A673 (cell line): ENCODE measurements at regions of chr17 and their contacts with region 1.

Region 1: GRCh38 chr17:34892461-34893249 is 68.6 kb downstream of the CCT6B start:
- DNase-seq: peak; percentile 25
- H3K4me3 ChIP-seq: no peak overlapping the region
- H3K27ac ChIP-seq: no peak overlapping the region
- H3K4me1 ChIP-seq: no peaks in the 10 kb centered on the region
- H3K27me3 ChIP-seq: no peaks in the 10 kb centered on the region
- CTCF ChIP-seq: peak; percentile 60

Region 2: DNA sequence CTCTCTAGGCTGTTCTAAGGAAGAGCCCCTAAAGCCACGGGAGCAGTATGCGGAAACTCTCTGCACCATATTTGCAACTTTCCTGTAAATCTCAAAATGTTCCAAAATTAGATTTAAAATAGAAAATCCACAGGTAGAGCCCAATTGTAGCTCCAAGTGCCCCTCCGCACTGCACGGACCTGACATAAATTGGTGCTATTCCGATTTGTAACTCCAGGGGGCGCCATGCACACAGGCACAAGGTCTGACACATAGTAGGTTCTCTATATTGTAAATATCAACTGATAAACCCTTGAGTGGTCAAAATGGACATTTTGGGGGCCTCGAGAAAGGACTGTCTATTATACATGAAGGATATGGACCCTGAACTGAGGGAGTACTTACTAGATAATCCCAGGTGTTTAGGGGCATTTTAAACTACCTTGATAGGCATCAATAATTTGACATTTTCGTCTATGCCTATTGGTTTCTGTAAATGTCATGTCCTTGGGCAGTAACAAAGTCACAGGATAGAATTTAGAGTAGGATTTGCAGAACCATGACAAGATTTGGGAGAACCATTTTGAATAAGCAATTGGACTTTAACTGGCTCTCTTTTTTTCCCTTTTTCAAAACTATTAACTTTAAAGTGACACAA is 349.8 kb before region 1 on chr17:
- CTCF ChIA-PET with region 1: no interaction called
- POLR2A ChIA-PET with region 1: no interaction called
- intact Hi-C with region 1: loop called (anchors 5 kb)
- DNase-seq: peak; percentile 2
- H3K4me3 ChIP-seq: no peak overlapping the region
- H3K27ac ChIP-seq: no peak overlapping the region
- H3K4me1 ChIP-seq: no peaks in the 10 kb centered on the region
- H3K27me3 ChIP-seq: peaks cover 13% of the 10 kb centered on the region
- CTCF ChIP-seq: peak; percentile 80

Region 3: GRCh38 chr17:34584805-34585416 is 307.7 kb before region 1 on chr17:
- CTCF ChIA-PET with region 1: interaction called, 3 read pairs
- POLR2A ChIA-PET with region 1: no interaction called
- intact Hi-C with region 1: loop called (anchors 5 kb)
- DNase-seq: peak; percentile 29
- H3K4me3 ChIP-seq: no peak overlapping the region
- H3K27ac ChIP-seq: no peak overlapping the region
- H3K4me1 ChIP-seq: peaks cover under 1% of the 10 kb centered on the region
- H3K27me3 ChIP-seq: peaks cover 47% of the 10 kb centered on the region
- CTCF ChIP-seq: peak; percentile 28; the same call in 1 of the 2 replicates